Pancreas (tissue), 10 donors: ENCODE measurements at regions of chr20 and their contacts with region 1.

Region 1: GRCh38 chr20:34849778-34850177 is 22.9 kb downstream of the GGT7 start:
- DNase-seq: no peak
- ATAC-seq: no peak
- H3K4me3 ChIP-seq: no peak overlapping the region
- H3K27ac ChIP-seq: no peak overlapping the region
- H3K4me1 ChIP-seq: no peaks in the 10 kb centered on the region
- H3K27me3 ChIP-seq: no peaks in the 10 kb centered on the region
- CTCF ChIP-seq: no peak

Region 2: DNA sequence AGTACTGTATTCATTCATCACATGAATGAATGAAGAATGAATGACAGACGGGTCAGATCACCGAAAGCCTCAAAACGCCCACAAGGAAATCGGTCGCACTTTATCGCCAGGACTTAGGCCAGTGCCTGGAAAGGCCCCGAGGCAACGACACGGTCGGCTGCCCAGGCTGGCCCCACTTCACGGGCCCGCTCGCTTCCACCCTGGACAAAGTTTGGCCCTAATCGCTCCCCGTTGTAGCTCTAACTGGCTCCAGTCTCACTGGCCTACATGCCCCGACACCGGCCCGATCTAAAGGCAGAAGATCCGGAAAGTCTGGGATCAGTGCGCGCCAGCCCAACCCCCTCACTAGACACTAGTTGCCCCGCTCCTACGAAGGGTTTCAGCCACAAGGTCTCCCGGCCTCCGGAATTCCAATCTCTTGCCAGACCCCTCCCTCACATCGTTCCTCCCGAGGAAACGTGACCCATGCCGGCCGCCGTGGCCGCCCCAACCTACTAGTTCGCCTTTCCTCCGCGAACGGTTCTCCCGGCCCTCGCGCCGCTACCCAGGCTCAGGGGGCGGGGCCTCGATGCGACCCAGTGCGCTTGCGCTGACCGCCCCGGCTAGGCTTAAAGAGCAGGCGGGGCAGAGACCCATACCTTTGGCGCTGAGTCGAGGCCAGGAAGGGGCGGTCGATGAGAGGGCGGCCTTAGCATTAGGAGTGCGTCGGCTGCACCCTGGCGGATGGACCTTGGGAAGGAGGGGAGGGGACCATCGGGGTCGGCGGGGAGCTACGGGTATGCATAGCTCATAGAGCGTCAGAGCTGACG is 105.7 kb after region 1 on chr20 and contains the starts of genes GSS and MYH7B:
- intact Hi-C with region 1: no loop called
- DNase-seq: peak; percentile 97 to 100 (median 99)
- ATAC-seq: peak; percentile 96 to 99 (median 98)
- H3K4me3 ChIP-seq: peak within 1 kb of the TSS; percentile 44 to 75 (median 57)
- H3K27ac ChIP-seq: peak within 1 kb of the TSS; percentile 24 to 86 (median 73)
- H3K4me1 ChIP-seq: peaks cover 0 to 4% (median 0%) of the 10 kb centered on the region in 3 donors
- H3K27me3 ChIP-seq: no peaks in the 10 kb centered on the region
- CTCF ChIP-seq: no peak
- total RNA-seq, gene GSS: 6.7 to 17.9 (median 10.7) TPM
- total RNA-seq, gene MYH7B: 0.09 to 0.72 (median 0.27) TPM

Region 3: GRCh38 chr20:35277531-35278395 is 428.0 kb after region 1 on chr20 and contains the start of gene MMP24OS:
- intact Hi-C with region 1: loop called in 1 of 3 experiments (anchors 10 kb)
- DNase-seq: peak; percentile 87 to 95 (median 89)
- ATAC-seq: peak; percentile 89 to 96 (median 96)
- H3K4me3 ChIP-seq: peak within 1 kb of the TSS; percentile 64 to 78 (median 74)
- H3K27ac ChIP-seq: peak within 1 kb of the TSS; percentile 90 to 98 (median 98)
- H3K4me1 ChIP-seq: peaks cover 0 to 16% (median 6%) of the 10 kb centered on the region in 3 donors
- H3K27me3 ChIP-seq: no peaks in the 10 kb centered on the region
- CTCF ChIP-seq: no peak
- total RNA-seq, gene MMP24OS: 28.9 to 49.9 (median 44.4) TPM